Activated CD4-positive, alpha-beta memory T cell treated with anti-CD3 and anti-CD28 coated beads, Interleukin-2, amount 10 ng/mL, durations not matched to agents 7 days and 5 days (primary cell): ENCODE measurements at regions of chr13 and their contacts with region 1.

Region 1: GRCh38 chr13:99436686-99437416 is 64.4 kb upstream of the TM9SF2 start:
- DNase-seq: peak; percentile 96
- H3K4me3 Mint-ChIP-seq: peak overlapping the region; percentile 51
- H3K27ac Mint-ChIP-seq: peak overlapping the region; percentile 48
- H3K4me1 Mint-ChIP-seq: peaks cover 66% of the 10 kb centered on the region
- H3K27me3 Mint-ChIP-seq: peaks cover 21% of the 10 kb centered on the region

Region 2: DNA sequence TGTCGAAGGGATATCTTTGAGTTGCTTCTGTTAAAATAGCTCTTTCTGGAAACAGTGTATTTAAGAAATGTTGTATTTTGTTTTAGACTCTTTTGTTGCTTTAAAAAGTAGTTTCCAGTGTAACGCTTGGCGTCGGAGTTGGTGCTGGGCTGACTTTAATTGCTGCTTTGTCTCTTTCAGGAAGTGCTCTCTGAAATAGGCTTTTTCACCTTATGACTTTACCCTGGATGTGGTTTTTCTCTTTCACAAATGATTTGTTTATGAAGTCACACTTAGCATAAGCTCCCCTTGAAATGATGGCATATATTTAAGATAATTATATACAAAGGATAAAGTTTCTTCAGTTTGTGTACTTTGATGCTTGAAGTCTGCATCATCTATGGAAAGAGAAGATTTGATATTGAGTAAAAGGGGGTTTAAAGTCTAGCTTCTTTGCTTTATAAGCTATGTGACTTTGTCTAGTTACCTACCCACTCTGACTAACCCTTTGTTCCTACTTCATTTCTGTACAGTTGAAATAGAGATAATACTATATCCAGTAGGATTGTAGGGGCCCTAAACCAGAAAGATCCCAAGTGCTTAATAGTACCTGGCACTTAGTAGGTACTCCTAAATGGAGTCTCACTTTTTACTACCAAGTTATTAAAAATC is 178.5 kb before region 1 on chr13 and contains the start of gene GPR18:
- CTCF ChIA-PET with region 1: interaction called, 24 read pairs
- POLR2A ChIA-PET with region 1: interaction called, 5 read pairs
- DNase-seq: peak; percentile 48
- H3K4me3 Mint-ChIP-seq: peak within 1 kb of the TSS; percentile 78
- H3K27ac Mint-ChIP-seq: peak within 1 kb of the TSS; percentile 91
- H3K4me1 Mint-ChIP-seq: peaks cover 54% of the 10 kb centered on the region
- H3K27me3 Mint-ChIP-seq: no peaks in the 10 kb centered on the region
- total RNA-seq, gene GPR18: 10.3 to 10.4 TPM

Region 3: DNA sequence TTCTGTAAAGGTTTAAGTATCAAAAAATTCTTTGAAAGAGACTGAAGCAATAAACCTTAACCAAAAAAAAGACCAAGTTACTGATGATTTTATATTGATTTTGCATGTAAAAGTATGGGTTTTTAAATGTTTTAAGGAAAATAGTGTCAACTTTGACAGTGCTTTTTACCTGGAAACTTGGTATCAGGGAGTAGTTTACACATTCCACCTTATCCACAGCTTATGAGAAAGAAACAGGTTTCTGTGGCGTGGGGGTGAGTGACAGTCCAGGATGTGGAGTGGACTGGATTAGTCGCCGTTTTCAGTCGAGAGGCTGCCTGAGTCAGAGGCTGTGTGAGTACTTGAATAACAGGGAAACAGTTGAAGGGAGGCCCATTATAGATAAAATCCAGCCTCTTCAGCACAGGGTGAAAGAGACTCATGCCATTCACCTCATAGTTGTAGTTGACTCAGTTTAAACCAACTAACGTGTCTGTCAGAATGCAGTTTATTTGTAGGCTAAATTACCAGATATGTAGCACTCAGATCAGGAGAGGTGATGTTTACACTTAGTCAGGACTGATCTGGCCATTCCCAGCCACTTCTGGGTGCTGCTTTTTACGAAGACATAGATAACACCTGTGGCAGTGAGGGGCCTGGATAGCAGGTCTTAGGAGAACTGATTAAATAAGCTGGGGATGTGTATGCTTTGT is 129.1 kb before region 1 on chr13:
- CTCF ChIA-PET with region 1: interaction called, 13 read pairs
- POLR2A ChIA-PET with region 1: interaction called, 54 read pairs
- DNase-seq: peak; percentile 78
- H3K4me3 Mint-ChIP-seq: peak overlapping the region; percentile 79
- H3K27ac Mint-ChIP-seq: peak overlapping the region; percentile 83
- H3K4me1 Mint-ChIP-seq: peaks cover 82% of the 10 kb centered on the region
- H3K27me3 Mint-ChIP-seq: no peaks in the 10 kb centered on the region

Region 4: GRCh38 chr13:99374994-99375737 is 61.7 kb before region 1 on chr13:
- CTCF ChIA-PET with region 1: interaction called, 19 read pairs
- POLR2A ChIA-PET with region 1: interaction called, 3 read pairs
- DNase-seq: no peak
- H3K4me3 Mint-ChIP-seq: no peak overlapping the region
- H3K27ac Mint-ChIP-seq: peak overlapping the region; percentile 21
- H3K4me1 Mint-ChIP-seq: peaks cover 77% of the 10 kb centered on the region
- H3K27me3 Mint-ChIP-seq: no peaks in the 10 kb centered on the region

Region 5: DNA sequence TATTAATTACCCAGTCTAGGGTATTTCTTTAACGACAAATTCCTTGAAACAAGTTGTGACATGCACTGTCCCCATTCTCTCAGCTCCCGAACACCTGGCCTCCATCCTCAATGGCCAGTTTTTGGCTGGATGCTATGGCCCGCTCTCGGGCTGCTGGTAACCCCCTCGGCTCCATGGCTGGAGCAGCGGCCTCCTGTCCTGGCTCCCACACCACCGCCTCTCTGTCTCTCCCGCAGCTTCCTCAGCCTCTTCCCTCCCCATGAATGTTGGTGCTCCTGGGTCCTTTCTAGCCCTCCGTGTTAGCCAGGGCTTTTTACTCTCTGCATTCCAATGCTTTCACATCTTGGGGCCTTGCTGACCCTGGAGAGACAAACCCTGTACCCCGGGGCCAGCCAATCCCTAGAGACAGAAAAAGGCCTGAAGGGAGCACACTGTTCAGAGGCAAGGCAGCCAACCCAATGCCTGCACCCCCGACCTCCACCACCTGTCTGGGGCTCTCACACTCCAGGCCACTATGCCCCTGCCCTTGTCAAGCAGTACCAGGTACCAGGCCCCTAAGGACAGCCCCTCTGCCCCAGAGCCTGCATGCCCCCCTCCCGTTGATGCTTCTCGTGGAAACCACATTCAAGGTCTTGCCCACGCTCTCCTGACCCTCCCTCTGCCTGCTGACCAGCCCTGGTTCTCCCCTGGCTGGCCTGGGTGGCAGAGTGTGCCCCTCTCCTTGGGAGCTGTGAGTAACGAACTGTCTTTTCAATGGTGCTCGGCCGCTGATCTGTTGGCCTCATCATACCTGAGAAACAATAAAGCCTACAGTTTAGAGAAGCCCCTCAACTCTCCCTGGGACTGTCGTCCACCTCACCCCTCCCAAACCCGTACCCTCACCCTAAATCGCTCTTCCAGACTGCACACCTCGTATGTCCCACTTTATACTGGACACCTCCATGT is 42.8 kb before region 1 on chr13:
- CTCF ChIA-PET with region 1: interaction called, 101 read pairs
- POLR2A ChIA-PET with region 1: interaction called, 33 read pairs
- DNase-seq: no peak
- H3K4me3 Mint-ChIP-seq: no peak overlapping the region
- H3K27ac Mint-ChIP-seq: no peak overlapping the region
- H3K4me1 Mint-ChIP-seq: no peaks in the 10 kb centered on the region
- H3K27me3 Mint-ChIP-seq: no peaks in the 10 kb centered on the region

Region 6: DNA sequence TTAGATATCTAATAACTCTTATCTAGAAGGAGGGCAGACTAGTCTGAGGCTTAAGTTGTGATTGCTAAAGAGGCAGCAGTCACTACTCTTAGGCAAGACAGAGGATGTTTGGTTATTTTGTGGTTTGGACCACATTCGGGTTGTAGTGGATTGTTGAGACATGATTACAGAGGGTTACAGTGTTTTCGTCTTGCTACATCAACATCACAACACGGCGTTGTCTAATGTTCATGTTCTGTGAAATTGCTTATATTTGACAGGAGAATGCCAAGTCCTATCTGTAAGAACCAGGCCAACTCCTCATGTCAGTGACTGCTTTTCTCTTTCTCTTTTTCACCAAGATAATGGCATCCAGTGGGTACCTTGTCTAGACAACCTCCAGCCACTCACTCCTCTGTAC is 47.6 kb after region 1 on chr13:
- CTCF ChIA-PET with region 1: interaction called, 11 read pairs
- POLR2A ChIA-PET with region 1: interaction called, 5 read pairs
- DNase-seq: peak; percentile 39
- H3K4me3 Mint-ChIP-seq: no peak overlapping the region
- H3K27ac Mint-ChIP-seq: peak overlapping the region; percentile 32
- H3K4me1 Mint-ChIP-seq: peaks cover 30% of the 10 kb centered on the region
- H3K27me3 Mint-ChIP-seq: no peaks in the 10 kb centered on the region